ENCODE measurements at regions of chr15 and their contacts with region 1.

Region 1: GRCh38 chr15:40274350-40275274 is 8.3 kb downstream of the ANKRD63 start:
- DNase-seq: peak; percentile 90
- H3K4me3 Mint-ChIP-seq: no peak overlapping the region
- H3K27ac Mint-ChIP-seq: peak overlapping the region; percentile 41
- H3K4me1 Mint-ChIP-seq: peaks cover 5% of the 10 kb centered on the region
- H3K27me3 Mint-ChIP-seq: peaks cover 25% of the 10 kb centered on the region

Region 2: DNA sequence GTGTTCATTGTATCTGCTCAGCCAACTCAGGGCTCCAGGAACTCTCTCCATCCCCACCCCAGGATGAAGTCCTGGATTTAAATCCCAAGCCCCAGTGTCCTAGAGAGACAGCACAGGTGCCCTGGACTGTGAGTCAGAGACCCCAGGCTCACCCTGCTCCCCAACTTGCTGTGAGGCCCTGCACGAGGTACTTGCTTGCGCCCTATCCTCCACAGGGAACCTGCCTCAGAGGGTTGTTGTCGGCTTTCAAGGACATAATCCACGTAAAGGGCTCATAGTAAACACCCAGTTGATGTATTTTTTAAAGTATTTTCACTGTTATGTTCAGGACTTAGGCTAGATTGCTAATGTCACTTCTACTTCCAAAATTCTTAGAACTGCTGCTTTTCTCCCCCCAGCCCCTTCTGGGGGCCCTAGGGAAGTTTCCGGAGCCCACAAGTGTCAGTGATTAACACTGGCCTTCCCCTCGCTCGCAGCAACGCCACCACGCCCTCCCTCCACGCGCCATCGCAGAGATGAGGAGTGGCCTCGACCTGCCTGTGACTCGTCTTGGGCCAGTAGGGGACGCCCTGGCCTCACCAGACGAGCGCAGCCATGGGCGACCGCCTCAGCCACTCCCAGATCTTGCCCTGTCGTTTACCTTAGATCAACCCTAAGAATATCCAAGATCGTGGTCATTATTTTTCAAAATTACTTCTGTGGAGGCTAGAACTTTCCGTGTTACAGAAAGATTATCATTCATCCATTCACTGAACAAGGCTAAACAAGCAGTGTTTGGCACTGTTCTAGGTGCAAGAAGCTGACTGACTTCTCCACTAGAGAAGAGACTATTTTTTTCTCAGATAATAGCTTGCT is 229.7 kb before region 1 on chr15:
- CTCF ChIA-PET with region 1: interaction called, 30 read pairs
- POLR2A ChIA-PET with region 1: interaction called, 4 read pairs
- DNase-seq: peak; percentile 84
- H3K4me3 Mint-ChIP-seq: no peak overlapping the region
- H3K27ac Mint-ChIP-seq: peak overlapping the region; percentile 72
- H3K4me1 Mint-ChIP-seq: peaks cover 73% of the 10 kb centered on the region
- H3K27me3 Mint-ChIP-seq: no peaks in the 10 kb centered on the region

Region 3: DNA sequence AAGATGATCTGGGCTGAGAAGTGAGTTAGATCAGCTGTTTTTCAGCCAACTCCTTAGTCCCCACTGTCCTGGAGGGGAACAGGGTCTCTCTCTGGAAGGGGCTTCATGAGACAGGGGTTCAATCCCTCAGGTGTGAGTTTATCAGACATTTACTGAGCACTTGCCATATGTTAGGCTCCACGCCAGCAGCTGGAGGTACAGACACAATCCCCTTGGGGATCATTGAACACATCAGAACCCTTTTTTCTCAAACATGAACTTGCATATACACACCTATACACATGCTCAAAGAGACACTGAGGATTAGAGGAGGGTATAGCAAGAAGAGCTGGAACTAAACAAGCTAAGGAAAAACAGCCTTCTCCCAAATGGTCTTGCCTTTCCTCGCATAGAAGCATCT is 160.4 kb before region 1 on chr15:
- CTCF ChIA-PET with region 1: no interaction called
- POLR2A ChIA-PET with region 1: no interaction called
- DNase-seq: no peak
- H3K4me3 Mint-ChIP-seq: no peak overlapping the region
- H3K27ac Mint-ChIP-seq: no peak overlapping the region
- H3K4me1 Mint-ChIP-seq: peaks cover 26% of the 10 kb centered on the region
- H3K27me3 Mint-ChIP-seq: peaks cover 15% of the 10 kb centered on the region

Region 4: DNA sequence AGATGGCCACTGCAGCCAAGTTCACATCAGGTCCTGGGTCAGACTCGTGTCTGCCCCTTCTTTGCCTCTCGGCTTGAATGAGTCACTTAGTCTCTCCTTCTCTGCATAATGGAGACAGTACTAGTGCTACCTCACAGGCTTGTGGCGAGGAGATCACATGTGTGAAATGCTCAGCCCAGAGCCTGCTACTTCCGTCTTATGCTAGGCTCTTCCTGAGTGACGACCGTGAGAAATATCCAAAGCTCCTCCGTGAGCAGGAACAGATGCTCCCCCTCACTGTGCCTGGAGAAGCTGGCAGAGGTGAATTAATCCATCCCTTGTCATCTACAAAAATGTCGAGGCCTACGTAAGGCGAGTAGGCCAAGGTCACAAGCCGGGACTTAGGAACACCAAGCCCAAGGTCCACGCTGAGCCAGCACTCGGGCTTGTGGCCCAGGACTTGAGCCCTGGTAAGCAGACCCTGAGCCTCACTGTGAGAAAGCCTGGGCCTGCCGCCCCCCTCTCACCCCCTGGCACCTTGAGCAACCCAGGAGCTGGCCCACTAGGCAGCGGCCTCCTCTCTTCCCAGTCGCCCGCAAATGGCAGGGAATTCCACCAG is 17.9 kb before region 1 on chr15:
- CTCF ChIA-PET with region 1: interaction called, 53 read pairs
- POLR2A ChIA-PET with region 1: no interaction called
- DNase-seq: no peak
- H3K4me3 Mint-ChIP-seq: no peak overlapping the region
- H3K27ac Mint-ChIP-seq: no peak overlapping the region
- H3K4me1 Mint-ChIP-seq: peaks cover 7% of the 10 kb centered on the region
- H3K27me3 Mint-ChIP-seq: peaks cover 29% of the 10 kb centered on the region

Region 5: GRCh38 chr15:40289140-40289775 is 14.6 kb after region 1 on chr15:
- CTCF ChIA-PET with region 1: interaction called, 13 read pairs
- POLR2A ChIA-PET with region 1: no interaction called
- DNase-seq: no peak
- H3K4me3 Mint-ChIP-seq: no peak overlapping the region
- H3K27ac Mint-ChIP-seq: no peak overlapping the region
- H3K4me1 Mint-ChIP-seq: no peaks in the 10 kb centered on the region
- H3K27me3 Mint-ChIP-seq: peaks cover 1% of the 10 kb centered on the region

Region 6: DNA sequence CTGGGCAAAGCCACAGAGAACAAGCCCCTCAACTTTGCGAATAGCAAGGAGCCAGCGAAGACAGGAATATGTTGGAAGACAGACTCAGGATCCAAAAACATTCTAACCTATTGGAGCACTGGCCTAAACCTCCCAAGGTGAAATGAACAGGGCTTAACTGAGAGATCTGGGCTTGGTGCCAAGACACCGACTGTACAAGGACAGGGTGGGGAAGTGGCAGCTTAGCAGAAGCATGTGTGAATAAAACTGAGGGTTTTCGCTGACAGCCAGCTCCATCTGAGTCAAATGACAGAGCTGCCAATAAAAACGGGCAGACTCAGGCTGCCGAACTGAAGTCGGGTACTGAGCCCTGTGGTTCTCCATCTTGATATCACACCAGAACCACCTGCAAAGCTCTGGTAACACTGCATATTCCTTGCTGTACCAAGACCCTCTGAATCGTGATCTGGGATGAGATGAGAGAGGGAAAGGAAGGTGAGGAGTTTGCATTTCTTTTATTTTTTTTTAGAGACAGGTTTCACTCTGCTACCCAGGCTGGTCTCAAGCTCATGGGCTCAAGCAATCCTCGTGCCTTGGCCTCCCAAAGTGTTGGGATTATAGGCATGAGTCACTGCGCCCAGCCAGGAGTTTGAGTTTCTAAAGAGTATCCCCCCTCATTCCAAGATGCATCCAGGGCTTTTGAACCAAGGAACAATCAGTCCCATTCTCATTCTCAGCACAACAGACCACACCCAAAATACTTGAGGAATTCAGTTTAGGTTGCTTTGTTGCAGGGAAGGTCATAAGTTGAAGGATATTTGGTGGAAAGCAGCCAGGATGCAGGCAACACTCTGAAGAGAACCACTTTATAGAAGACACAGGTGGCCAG is 39.2 kb after region 1 on chr15:
- CTCF ChIA-PET with region 1: interaction called, 61 read pairs
- POLR2A ChIA-PET with region 1: no interaction called
- DNase-seq: peak; percentile 23
- H3K4me3 Mint-ChIP-seq: no peak overlapping the region
- H3K27ac Mint-ChIP-seq: peak overlapping the region; percentile 65
- H3K4me1 Mint-ChIP-seq: peaks cover 20% of the 10 kb centered on the region
- H3K27me3 Mint-ChIP-seq: peaks cover 24% of the 10 kb centered on the region

Region 7: DNA sequence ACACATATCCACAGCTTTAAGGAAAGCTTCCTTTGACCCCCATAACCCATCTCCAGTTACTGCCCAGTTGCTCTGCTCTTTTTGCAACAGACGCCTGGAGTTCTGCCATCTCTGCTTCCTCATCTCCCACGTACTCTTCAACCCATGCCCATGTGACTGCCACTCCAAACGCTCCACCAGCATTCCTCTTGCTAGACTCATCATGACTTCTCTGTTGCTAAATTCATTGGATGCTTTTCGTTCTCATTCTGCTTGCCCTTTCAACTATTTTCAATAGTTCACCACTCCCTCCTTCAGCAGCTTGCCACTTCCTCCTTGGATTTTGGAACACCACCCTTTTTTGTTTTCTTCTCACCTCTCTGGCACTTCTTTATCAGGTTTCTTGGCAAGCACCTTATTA is 105.2 kb after region 1 on chr15:
- CTCF ChIA-PET with region 1: no interaction called
- POLR2A ChIA-PET with region 1: no interaction called
- DNase-seq: no peak
- H3K4me3 Mint-ChIP-seq: no peak overlapping the region
- H3K27ac Mint-ChIP-seq: no peak overlapping the region
- H3K4me1 Mint-ChIP-seq: peaks cover 27% of the 10 kb centered on the region
- H3K27me3 Mint-ChIP-seq: peaks cover 4% of the 10 kb centered on the region

Measured in activated CD4-positive, alpha-beta T cell treated with anti-CD3 and anti-CD28 coated beads, Interleukin-2, amount 10 ng/mL, durations not matched to agents 7 days and 5 days (primary cell).